Dendritic cell treated with granulocyte-macrophage colony-stimulating factor and Interleukin-4, amounts not matched to agents 40 ng/mL and 50 ng/mL, for 4 days (primary cell): ENCODE measurements at regions of chr11 and their contacts with region 1.

Region 1: DNA sequence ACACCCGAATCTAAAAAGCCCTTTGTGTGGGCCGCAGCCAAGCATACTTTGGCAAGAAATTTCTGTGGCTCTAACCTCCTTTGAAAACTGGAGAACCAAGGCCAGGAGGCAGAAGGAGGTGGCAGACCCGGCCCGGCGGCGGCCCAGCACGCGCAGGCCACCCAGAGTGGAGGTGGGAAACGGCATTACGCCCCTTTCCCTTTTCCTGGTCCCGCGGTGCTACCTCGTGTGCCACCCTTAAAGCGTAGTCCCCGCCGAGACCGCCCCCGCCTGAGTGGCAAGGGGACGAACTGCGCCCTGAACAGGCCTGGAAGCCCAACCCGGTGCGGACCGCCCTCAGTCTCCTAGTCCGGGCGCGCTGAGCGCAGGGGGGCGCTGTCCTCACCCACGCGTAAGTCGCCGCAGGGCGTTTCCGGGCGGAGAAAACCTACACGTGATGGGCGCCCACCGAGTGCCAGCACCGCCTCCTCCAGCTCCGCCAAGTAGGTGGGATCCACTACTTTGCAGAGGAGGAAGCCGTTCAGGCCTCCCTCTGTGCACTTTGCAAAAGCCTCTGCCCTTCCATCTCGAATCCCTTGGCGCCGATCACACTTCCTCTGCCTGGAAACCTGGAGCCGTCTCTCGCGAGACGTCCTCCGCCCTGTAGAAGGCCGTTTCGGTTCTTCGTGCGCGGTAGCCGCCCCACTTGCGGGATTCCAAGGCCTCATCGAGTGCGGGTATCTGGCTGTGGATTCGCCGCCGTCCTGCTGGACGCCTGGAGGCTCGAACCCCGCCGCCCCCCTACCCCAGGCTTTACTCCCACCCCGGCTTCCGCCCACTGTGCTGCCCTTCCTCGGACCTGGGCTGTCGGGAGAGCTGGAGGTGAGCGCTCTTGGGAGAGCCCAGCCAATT is at the start of gene ACCS:
- H3K4me3 Mint-ChIP-seq: peak within 1 kb of the TSS; percentile 91
- H3K27ac Mint-ChIP-seq: peak within 1 kb of the TSS; percentile 98
- H3K4me1 Mint-ChIP-seq: peaks cover 26% of the 10 kb centered on the region
- H3K27me3 Mint-ChIP-seq: peaks cover 5% of the 10 kb centered on the region

Region 2: DNA sequence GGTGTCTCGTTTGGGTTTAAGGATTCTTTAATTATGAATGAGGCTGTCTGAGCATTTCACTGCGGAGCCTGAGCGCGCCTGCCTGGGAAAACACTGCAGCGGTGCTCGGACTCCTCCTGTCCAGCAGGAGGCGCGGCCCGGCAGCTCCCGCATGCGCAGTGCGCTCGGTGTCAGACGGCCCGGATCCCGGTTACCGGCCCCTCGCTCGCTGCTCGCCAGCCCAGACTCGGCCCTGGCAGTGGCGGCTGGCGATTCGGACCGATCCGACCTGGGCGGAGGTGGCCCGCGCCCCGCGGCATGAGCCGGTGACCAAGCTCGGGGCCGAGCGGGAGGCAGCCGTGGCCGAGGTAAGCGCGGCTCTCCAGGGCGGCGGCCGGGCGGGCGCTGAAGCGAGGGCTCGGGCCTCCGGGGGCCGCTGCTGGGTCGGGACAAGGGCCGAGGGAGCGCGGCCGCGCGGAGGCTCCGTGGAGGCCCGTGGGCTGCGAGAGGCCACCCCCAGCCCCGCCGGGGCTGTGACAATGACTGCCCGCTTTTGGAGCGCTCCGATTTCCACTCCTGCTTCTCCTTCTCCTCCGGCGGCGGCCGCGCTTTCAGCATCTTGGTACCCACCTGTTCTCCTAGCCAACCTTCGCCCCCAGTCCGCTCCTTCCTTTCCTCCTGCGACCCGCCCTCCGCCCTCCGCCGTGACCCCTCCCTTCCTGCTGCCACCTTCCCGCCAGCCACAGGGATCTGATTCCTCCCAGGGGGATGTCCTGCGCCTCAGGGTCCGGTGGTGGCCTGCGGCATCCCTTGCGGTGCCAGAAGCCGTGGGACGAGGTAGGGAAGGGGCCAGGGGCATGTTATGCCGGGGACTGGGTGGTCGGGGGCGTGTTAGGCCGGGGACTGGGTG is 29.7 kb after region 1 on chr11 and contains the start of gene EXT2:
- intact Hi-C with region 1: loop called (anchors 2 kb)
- H3K4me3 Mint-ChIP-seq: peak within 1 kb of the TSS; percentile 80
- H3K27ac Mint-ChIP-seq: no peak within 1 kb of the TSS
- H3K4me1 Mint-ChIP-seq: peaks cover 6% of the 10 kb centered on the region
- H3K27me3 Mint-ChIP-seq: peaks cover 6% of the 10 kb centered on the region

Region 3: GRCh38 chr11:44286268-44286880 is 220.3 kb after region 1 on chr11:
- intact Hi-C with region 1: no loop called
- H3K4me3 Mint-ChIP-seq: no peak overlapping the region
- H3K27ac Mint-ChIP-seq: no peak overlapping the region
- H3K4me1 Mint-ChIP-seq: no peaks in the 10 kb centered on the region
- H3K27me3 Mint-ChIP-seq: peaks cover 9% of the 10 kb centered on the region